ENCODE measurements at regions of chr16 and their contacts with region 1.

Region 1: DNA sequence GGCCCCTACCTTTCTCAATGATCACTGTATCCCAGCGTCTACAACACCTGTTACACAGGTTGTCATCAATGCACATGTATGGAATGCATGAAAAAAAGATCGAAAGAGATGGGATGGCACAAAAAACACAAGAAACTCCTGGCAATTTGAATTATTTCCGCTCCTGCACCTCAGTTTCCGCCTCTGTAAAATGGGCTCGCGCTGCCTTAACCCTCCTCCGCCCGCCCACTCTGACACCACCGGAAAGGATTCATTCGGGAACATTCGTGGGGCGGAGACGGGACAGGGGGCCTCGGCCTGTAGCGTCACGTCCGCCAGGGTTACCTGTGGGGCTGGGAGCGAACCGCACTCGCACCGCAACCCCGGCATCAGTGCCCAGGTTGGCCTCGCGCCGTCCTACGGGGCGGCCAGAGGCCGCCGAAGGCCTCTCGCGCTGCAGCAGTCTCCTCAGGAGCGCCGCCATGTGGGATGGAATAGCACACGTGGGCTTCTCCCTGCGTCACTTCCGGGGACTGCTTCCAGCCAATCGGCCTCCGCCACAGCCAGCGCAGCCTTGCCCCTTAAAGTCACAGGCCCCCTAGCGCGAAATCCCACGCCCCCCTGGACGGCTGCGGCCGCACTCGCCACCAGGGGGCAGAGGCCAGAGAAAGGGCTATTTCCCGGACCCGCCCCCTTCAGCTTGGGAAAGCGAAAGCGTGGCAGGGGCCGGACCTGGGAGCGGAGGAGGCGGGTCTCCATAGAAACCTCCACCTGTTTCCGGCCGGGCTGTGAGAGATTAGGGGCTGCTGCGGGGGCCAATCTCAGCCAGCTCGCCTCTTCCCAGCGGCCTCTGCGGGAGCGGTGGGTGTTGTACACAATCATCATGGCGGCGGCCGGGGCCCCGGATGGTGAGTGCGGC is at the starts of genes EARS2 and UBFD1:
- DNase-seq: peak; percentile 98 to 99
- H3K4me3 ChIP-seq: peak within 1 kb of the TSS; percentile 95
- H3K4me3 Mint-ChIP-seq: peak within 1 kb of the TSS; percentile 87
- H3K27ac Mint-ChIP-seq: peak within 1 kb of the TSS; percentile 90
- H3K4me1 ChIP-seq: peaks cover 13% of the 10 kb centered on the region
- H3K4me1 Mint-ChIP-seq: no peaks in the 10 kb centered on the region
- H3K27me3 ChIP-seq: no peaks in the 10 kb centered on the region
- H3K27me3 Mint-ChIP-seq: no peaks in the 10 kb centered on the region
- CTCF ChIP-seq: peak; percentile 75 to 94
- total RNA-seq, gene EARS2: 29.6 and 32.4 TPM in 2 replicates
- total RNA-seq, gene UBFD1: 78.6 and 83.1 TPM in 2 replicates

Region 2: GRCh38 chr16:23504451-23505179 is 52.5 kb before region 1 on chr16:
- CTCF ChIA-PET with region 1: no interaction called
- POLR2A ChIA-PET with region 1: interaction called, 6 read pairs
- intact Hi-C with region 1: loop called (anchors 5 kb)
- DNase-seq: peak; percentile 68 to 72
- H3K4me3 ChIP-seq: no peak overlapping the region
- H3K4me3 Mint-ChIP-seq: no peak overlapping the region
- H3K27ac Mint-ChIP-seq: no peak overlapping the region
- H3K4me1 ChIP-seq: peaks cover 17% of the 10 kb centered on the region
- H3K4me1 Mint-ChIP-seq: peaks cover 26% of the 10 kb centered on the region
- H3K27me3 ChIP-seq: no peaks in the 10 kb centered on the region
- H3K27me3 Mint-ChIP-seq: no peaks in the 10 kb centered on the region
- CTCF ChIP-seq: peak; percentile 6 to 16

Region 3: DNA sequence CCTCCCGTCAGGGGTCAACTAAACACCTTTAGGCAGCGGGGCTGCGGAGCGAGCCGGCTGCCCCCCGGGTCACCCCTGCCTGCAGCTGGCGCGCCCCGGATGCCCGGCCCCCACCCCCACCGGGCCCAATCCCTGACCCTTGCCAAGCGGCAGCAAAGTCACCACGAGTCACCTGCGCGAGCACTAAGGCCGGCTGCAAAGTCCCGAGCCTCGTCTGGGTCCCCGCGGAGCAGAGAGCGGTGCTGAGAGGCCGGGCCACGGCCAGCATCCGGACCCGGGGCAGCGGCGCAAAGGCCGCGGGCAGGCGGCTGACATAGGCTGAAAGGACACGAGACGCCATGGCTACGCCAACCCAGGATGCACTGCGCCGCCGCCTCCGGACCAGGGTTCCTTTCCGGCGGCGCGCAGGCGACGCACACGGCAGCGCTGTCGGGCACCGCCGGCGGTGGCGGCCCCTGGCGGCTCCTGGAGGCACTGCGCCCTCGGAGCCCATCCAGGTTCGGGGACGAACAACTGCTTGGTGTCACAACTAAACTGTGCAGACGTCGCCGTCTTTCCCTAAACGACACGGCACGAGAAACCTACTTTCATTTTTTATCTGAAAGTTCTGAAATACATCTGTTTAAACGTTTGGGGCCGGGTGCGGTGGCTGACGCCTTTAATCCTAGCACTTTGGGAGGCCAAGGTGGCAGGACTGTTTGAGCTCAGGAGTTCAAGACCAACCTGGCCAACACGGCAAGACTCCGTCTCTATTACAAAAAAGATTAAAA is 39.0 kb after region 1 on chr16 and contains the start of gene NDUFAB1:
- CTCF ChIA-PET with region 1: interaction called, 8 read pairs
- POLR2A ChIA-PET with region 1: interaction called, 9 read pairs
- intact Hi-C with region 1: loop called (anchors 1 kb)
- DNase-seq: peak; percentile 85 to 93
- H3K4me3 ChIP-seq: peak within 1 kb of the TSS; percentile 92
- H3K4me3 Mint-ChIP-seq: peak within 1 kb of the TSS; percentile 75
- H3K27ac Mint-ChIP-seq: peak within 1 kb of the TSS; percentile 50
- H3K4me1 ChIP-seq: no peaks in the 10 kb centered on the region
- H3K4me1 Mint-ChIP-seq: no peaks in the 10 kb centered on the region
- H3K27me3 ChIP-seq: no peaks in the 10 kb centered on the region
- H3K27me3 Mint-ChIP-seq: no peaks in the 10 kb centered on the region
- CTCF ChIP-seq: peak; percentile 67 to 85
- total RNA-seq, gene NDUFAB1: 83.4 and 87.1 TPM in 2 replicates

Region 4: DNA sequence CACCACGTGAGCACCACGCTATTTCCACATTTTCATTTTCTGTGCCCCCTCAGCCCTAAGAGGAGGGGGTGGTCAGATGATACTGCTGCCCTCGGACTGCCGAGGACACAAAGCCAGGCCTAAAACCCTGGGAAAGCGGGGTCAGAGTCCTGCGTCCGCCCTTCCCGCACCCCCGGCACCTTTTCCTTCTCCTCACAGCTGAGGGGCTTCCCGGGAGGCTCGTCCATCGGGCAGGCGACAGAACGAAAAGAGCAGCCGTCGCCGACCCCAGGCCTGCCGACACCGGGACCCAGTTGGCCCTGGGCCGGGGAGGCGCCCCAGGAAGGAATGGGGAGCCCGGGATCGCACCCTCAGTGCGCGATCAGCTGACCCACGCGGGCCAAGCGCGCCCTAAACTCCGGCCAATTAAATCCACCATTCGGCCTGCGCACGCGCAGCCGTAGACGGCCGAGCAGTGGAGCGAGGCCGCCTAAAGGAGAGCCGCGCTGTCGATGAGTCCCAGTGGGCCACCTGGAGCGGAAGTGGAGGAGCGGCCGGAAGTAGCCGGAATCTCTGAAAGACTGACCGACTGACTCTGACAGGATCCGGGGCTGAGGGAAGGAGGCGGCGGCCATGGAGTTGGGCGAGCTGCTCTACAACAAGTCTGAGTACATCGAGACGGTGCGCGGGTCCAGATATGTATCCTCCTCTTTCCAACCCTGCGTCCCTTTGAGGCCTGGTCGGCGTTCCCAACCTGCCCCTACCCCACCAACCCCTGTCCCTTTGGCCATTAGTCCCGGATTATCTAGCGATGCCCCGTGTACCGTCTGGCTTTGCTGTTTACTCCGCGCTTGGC is 84.0 kb after region 1 on chr16 and contains the starts of genes DCTN5 and PALB2:
- CTCF ChIA-PET with region 1: no interaction called
- POLR2A ChIA-PET with region 1: no interaction called
- intact Hi-C with region 1: loop called (anchors 1 kb)
- DNase-seq: peak; percentile 90 to 93
- H3K4me3 ChIP-seq: peak within 1 kb of the TSS; percentile 99
- H3K4me3 Mint-ChIP-seq: peak within 1 kb of the TSS; percentile 96
- H3K27ac Mint-ChIP-seq: peak within 1 kb of the TSS; percentile 93
- H3K4me1 ChIP-seq: no peaks in the 10 kb centered on the region
- H3K4me1 Mint-ChIP-seq: peaks cover 7% of the 10 kb centered on the region
- H3K27me3 ChIP-seq: no peaks in the 10 kb centered on the region
- H3K27me3 Mint-ChIP-seq: no peaks in the 10 kb centered on the region
- CTCF ChIP-seq: no peak
- total RNA-seq, gene DCTN5: 91.0 and 101 TPM in 2 replicates
- total RNA-seq, gene PALB2: 19.4 and 20.5 TPM in 2 replicates